ENCODE measurements at regions of chr18 and their contacts with region 1.

Region 1: GRCh38 chr18:50707855-50708469 is 111.9 kb downstream of the MRO start:
- DNase-seq: peak in 1 of 2 donors; percentile 76
- H3K4me3 ChIP-seq: no peak overlapping the region
- H3K27ac ChIP-seq: peak overlapping the region in 1 of 2 donors; percentile 1
- H3K4me1 ChIP-seq: no peaks in the 10 kb centered on the region
- H3K27me3 ChIP-seq: no peaks in the 10 kb centered on the region
- CTCF ChIP-seq: no peak

Region 2: DNA sequence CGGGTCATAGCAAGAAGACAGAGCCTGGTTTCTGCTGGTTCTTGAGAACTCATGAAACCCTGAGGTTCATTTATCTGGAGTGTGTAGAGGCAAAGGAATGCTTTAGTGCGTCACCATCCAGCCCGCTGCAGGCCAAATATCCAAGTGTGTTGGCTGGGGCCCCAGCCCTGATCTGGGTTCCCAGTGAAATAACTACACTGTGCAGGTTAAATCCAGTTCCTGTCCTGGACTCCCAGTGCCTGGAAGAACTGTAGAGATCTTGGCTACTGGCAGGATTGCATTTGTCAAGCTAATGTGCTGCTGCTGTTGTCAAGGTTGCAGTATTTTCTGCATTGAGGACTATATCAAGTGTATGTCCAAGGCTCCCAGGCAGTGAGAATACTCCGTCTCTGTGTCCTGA is 58.1 kb before region 1 on chr18:
- intact Hi-C with region 1: loop called (anchors 5 kb)
- DNase-seq: peak; percentile 22 to 90
- H3K4me3 ChIP-seq: no peak overlapping the region
- H3K27ac ChIP-seq: peak overlapping the region; percentile 83 to 84
- H3K4me1 ChIP-seq: peaks cover 20 to 35% of the 10 kb centered on the region in 2 donors
- H3K27me3 ChIP-seq: no peaks in the 10 kb centered on the region
- CTCF ChIP-seq: no peak

Measured in ascending aorta (tissue), 2 donors.